ENCODE measurements at regions of chr18 and their contacts with region 1.

Region 1: DNA sequence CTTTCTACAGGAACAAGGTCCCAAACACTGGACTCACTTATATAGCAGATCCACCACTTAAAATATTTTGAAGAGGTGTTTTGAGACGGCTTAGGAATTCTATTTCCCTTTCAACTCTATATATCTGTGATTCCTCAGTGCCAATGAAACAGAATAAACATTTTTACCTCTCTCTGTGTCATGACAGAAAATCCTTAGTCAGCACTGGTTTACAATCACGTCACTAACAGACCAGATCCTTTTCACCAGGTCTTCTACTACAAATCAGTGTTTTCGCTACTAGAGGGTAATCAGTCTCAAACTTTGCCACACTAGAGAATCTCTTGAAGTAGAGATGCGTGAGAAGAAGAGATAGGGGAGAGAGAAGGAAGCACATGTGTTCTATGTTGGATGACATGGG is 325.6 kb downstream of the SS18 start:
- DNase-seq: no peak
- ATAC-seq: no peak
- H3K4me3 ChIP-seq: no peak overlapping the region
- H3K27ac ChIP-seq: no peak overlapping the region
- H3K4me1 ChIP-seq: no peaks in the 10 kb centered on the region
- H3K27me3 ChIP-seq: peaks cover 7% of the 10 kb centered on the region
- CTCF ChIP-seq: no peak
- POLR2A ChIP-seq: no peak
- RAD21 ChIP-seq: no peak

Region 2: DNA sequence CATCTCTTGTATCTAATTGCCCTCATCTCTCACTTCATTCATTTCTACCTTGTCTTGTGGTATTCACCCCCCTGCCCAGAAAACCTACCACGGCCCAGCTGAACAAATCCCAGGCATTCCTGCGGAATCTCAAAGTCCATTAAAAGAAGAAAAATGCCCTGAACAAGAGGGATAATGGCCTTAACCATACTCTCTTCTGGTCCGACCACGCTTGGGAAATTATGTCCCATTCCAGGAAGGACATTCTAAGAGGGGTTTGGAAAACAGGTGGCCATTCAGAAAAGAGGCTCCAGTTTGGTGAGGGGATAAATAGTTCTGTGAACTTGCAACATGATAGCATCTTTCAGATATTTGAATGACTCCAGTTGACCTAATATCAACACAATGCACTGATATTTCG is 63.0 kb before region 1 on chr18:
- CTCF ChIA-PET with region 1: no interaction called
- POLR2A ChIA-PET with region 1: no interaction called
- dilution Hi-C with region 1: no loop called
- in situ Hi-C with region 1: no loop called
- intact Hi-C with region 1: no loop called
- DNase-seq: no peak
- ATAC-seq: no peak
- H3K4me3 ChIP-seq: no peak overlapping the region
- H3K27ac ChIP-seq: no peak overlapping the region
- H3K4me1 ChIP-seq: no peaks in the 10 kb centered on the region
- H3K27me3 ChIP-seq: peaks cover 9% of the 10 kb centered on the region
- CTCF ChIP-seq: no peak
- POLR2A ChIP-seq: no peak
- RAD21 ChIP-seq: no peak

Region 3: GRCh38 chr18:25786758-25787157 is 22.0 kb after region 1 on chr18:
- CTCF ChIA-PET with region 1: no interaction called
- POLR2A ChIA-PET with region 1: no interaction called
- dilution Hi-C with region 1: no loop called
- in situ Hi-C with region 1: no loop called
- intact Hi-C with region 1: loop called (anchors 2 kb)
- DNase-seq: peak; percentile 83
- ATAC-seq: peak; percentile 90
- H3K4me3 ChIP-seq: no peak overlapping the region
- H3K27ac ChIP-seq: no peak overlapping the region
- H3K4me1 ChIP-seq: peaks cover 5% of the 10 kb centered on the region; the same call in 1 of the 2 replicates
- H3K27me3 ChIP-seq: no peaks in the 10 kb centered on the region
- CTCF ChIP-seq: no peak
- POLR2A ChIP-seq: no peak
- RAD21 ChIP-seq: no peak